ENCODE measurements at regions of chr21 and their contacts with region 1.

Region 1: GRCh38 chr21:37366482-37367316 is at the start of gene DYRK1A:
- DNase-seq: peak; percentile 98
- ATAC-seq: peak; percentile 93
- H3K4me3 Mint-ChIP-seq: peak within 1 kb of the TSS; percentile 97
- H3K27ac Mint-ChIP-seq: peak within 1 kb of the TSS; percentile 100
- H3K4me1 Mint-ChIP-seq: peaks cover 43% of the 10 kb centered on the region
- H3K27me3 Mint-ChIP-seq: no peaks in the 10 kb centered on the region
- CTCF ChIP-seq: no peak
- total RNA-seq, gene DYRK1A: 54.6 to 56.5 TPM (median 54.8 TPM) in 3 replicates

Region 2: GRCh38 chr21:37257967-37258877 is 108.5 kb before region 1 on chr21:
- CTCF ChIA-PET with region 1: interaction called, 3 read pairs
- POLR2A ChIA-PET with region 1: interaction called, 13 read pairs
- DNase-seq: peak; percentile 75
- ATAC-seq: peak; percentile 75
- H3K4me3 Mint-ChIP-seq: peak overlapping the region; percentile 81
- H3K27ac Mint-ChIP-seq: peak overlapping the region; percentile 99
- H3K4me1 Mint-ChIP-seq: peaks cover 27% of the 10 kb centered on the region
- H3K27me3 Mint-ChIP-seq: no peaks in the 10 kb centered on the region
- CTCF ChIP-seq: no peak

Region 3: GRCh38 chr21:37267269-37268184 is 99.2 kb before region 1 on chr21 and contains the start of gene VPS26C:
- CTCF ChIA-PET with region 1: interaction called, 3 read pairs
- POLR2A ChIA-PET with region 1: interaction called, 15 read pairs
- DNase-seq: peak; percentile 98
- ATAC-seq: peak; percentile 90
- H3K4me3 Mint-ChIP-seq: peak within 1 kb of the TSS; percentile 93
- H3K27ac Mint-ChIP-seq: peak within 1 kb of the TSS; percentile 99
- H3K4me1 Mint-ChIP-seq: peaks cover 42% of the 10 kb centered on the region
- H3K27me3 Mint-ChIP-seq: no peaks in the 10 kb centered on the region
- CTCF ChIP-seq: no peak
- total RNA-seq, gene VPS26C: 55.0 to 62.8 TPM (median 56.7 TPM) in 3 replicates

Region 4: GRCh38 chr21:37281993-37282392 is 84.7 kb before region 1 on chr21:
- CTCF ChIA-PET with region 1: no interaction called
- POLR2A ChIA-PET with region 1: no interaction called
- DNase-seq: peak; percentile 37
- ATAC-seq: no peak
- H3K4me3 Mint-ChIP-seq: no peak overlapping the region
- H3K27ac Mint-ChIP-seq: no peak overlapping the region
- H3K4me1 Mint-ChIP-seq: peaks cover 12% of the 10 kb centered on the region
- H3K27me3 Mint-ChIP-seq: no peaks in the 10 kb centered on the region; the same call in 1 of the 2 replicates
- CTCF ChIP-seq: no peak

Measured in WTC11 (cell line).